ENCODE measurements at regions of chr10 and their contacts with region 1.

Region 1: GRCh38 chr10:88932539-88933256 is 19.9 kb downstream of the ACTA2 start:
- DNase-seq: no peak
- ATAC-seq: peak; percentile 80
- H3K4me3 ChIP-seq: no peak overlapping the region
- H3K27ac ChIP-seq: peak overlapping the region; percentile 56; the same call in 1 of the 2 replicates
- H3K4me1 ChIP-seq: peaks cover 21% of the 10 kb centered on the region
- H3K27me3 ChIP-seq: no peaks in the 10 kb centered on the region
- CTCF ChIP-seq: peak; percentile 85 to 98 (median 95); a peak in 5 of 6 replicates
- EP300 ChIP-seq: no peak
- POLR2A ChIP-seq: no peak
- RAD21 ChIP-seq: peak; percentile 81

Region 2: DNA sequence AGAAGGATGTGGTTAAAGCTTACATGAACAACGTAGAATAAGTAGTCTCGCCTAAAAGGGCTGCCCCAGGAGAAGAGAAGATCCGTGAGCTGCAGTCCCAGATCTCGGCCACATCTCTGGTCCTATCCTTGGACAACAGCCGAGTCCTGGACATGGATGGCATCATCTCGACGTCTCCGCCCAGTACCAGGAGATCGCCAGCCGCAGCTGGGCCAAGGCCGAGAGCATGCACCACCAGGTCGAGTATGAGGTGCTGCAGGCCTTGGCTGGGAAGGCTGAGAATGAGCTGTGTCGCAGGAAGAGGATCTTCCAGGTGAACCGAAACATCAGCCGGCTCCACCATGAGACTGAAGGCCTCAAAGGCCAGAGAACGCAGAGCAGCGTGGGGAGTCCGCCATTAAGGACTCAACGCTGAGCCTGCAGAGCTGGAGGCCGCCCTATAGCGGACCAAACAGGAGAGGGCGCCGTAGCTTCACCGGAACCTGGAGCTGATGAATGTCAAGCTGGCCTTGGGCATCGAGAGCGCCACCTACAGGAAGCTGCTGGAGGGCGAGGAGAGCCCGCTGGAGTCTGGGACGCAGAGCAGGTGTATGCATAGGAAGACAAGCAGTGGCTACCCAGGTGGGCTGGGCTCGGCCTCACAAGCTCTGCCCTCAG is 204.5 kb before region 1 on chr10:
- CTCF ChIA-PET with region 1: interaction called, 17 read pairs
- POLR2A ChIA-PET with region 1: no interaction called
- RAD21 ChIA-PET with region 1: interaction called, 23 read pairs
- SMC1A ChIA-PET with region 1: interaction called, 11 read pairs
- in situ Hi-C with region 1: no loop called
- intact Hi-C with region 1: no loop called
- DNase-seq: no peak
- ATAC-seq: peak; percentile 53
- H3K4me3 ChIP-seq: no peak overlapping the region
- H3K27ac ChIP-seq: no peak overlapping the region
- H3K4me1 ChIP-seq: peaks cover 3% of the 10 kb centered on the region
- H3K27me3 ChIP-seq: no peaks in the 10 kb centered on the region
- CTCF ChIP-seq: peak; percentile 39 to 65 (median 51); a peak in 5 of 6 replicates
- EP300 ChIP-seq: no peak
- POLR2A ChIP-seq: no peak
- RAD21 ChIP-seq: peak; percentile 79

Region 3: DNA sequence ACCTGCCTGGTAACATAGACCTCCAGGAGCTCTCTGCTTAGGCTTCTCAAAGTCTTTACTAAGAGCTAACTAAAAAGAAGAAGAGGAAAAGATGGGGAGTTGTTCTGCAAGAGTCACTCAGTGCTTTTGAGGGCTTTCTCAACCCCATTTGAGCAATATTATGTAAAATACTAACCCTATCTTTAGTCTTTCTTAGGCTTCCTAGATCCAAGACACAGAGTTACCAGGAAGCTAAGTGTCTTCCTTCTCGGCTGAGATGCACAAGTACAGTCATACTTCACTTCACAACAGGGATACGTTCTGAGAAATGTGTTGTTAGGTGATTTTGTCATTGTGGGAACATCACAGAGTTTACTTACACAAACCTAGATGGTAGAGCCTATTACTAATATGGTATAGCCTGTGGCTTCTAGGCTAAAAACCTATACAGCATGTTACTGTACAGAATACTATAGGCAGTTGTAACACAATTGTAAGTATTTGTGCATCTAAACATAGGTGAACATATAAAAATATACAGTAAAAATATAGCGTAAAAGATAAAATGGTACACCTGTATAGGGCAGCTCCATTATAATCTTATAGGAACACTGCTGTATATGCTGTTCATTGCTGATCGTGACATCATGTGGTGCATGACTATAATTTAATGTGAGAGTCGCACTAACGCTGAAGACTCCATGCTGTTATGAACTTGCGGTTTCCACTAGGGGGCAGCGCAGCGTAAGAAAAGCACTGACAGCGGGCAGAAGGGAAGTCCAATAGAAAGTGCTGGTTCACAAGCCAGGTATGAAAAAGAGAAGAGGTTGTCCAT is 97.4 kb before region 1 on chr10:
- CTCF ChIA-PET with region 1: interaction called, 895 read pairs
- POLR2A ChIA-PET with region 1: interaction called, 64 read pairs
- RAD21 ChIA-PET with region 1: interaction called, 390 read pairs
- SMC1A ChIA-PET with region 1: interaction called, 575 read pairs
- in situ Hi-C with region 1: loop called (anchors 5 kb)
- intact Hi-C with region 1: loop called (anchors 1 kb)
- DNase-seq: peak; percentile 59
- ATAC-seq: peak; percentile 96
- H3K4me3 ChIP-seq: no peak overlapping the region
- H3K27ac ChIP-seq: no peak overlapping the region
- H3K4me1 ChIP-seq: peaks cover 11% of the 10 kb centered on the region
- H3K27me3 ChIP-seq: no peaks in the 10 kb centered on the region
- CTCF ChIP-seq: peak; percentile 78 to 97 (median 91)
- EP300 ChIP-seq: no peak
- POLR2A ChIP-seq: no peak
- RAD21 ChIP-seq: peak; percentile 99

Region 4: GRCh38 chr10:88886557-88886956 is 46.1 kb before region 1 on chr10:
- CTCF ChIA-PET with region 1: interaction called, 64 read pairs
- POLR2A ChIA-PET with region 1: interaction called, 7 read pairs
- RAD21 ChIA-PET with region 1: interaction called, 54 read pairs
- SMC1A ChIA-PET with region 1: interaction called, 110 read pairs
- in situ Hi-C with region 1: no loop called
- intact Hi-C with region 1: loop called (anchors 2 kb)
- DNase-seq: no peak
- ATAC-seq: peak; percentile 76
- H3K4me3 ChIP-seq: peak overlapping the region; percentile 55
- H3K27ac ChIP-seq: peak overlapping the region; percentile 61
- H3K4me1 ChIP-seq: peaks cover 46% of the 10 kb centered on the region
- H3K27me3 ChIP-seq: no peaks in the 10 kb centered on the region
- CTCF ChIP-seq: no peak
- EP300 ChIP-seq: no peak
- POLR2A ChIP-seq: 0 out of 2 replicates have a peak, but pooled peaks have one; percentile 26
- RAD21 ChIP-seq: no peak

Region 5: DNA sequence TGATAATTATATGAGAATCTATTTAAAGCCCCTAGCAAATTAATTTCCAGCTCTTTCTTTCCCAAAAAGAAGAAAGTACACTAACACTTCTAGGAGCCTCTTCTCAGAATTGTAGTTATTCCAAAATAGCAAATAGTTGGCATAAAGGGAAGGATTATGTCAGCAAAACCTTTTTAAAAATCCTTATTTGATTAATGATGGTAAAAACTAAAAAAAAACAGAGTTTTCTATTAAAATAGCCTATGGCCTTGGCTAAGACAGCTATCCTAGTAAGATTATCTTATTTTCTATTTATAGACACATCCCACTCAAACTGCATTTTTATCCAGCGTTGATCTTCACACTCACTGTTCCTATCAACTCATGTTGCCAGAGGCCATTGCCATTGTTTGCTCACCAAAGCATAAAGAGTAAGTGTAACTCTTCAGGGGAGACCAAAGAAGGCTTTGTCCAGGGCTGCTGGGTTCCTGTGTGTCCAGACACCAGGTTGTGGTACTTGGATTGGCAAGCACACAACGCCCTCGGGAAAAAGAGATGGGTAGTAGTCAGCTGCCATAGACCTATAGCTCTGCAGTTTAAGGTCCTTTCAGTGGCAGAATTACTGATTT is 11.6 kb before region 1 on chr10:
- CTCF ChIA-PET with region 1: interaction called, 29 read pairs
- POLR2A ChIA-PET with region 1: interaction called, 4 read pairs
- RAD21 ChIA-PET with region 1: interaction called, 4 read pairs
- SMC1A ChIA-PET with region 1: interaction called, 42 read pairs
- in situ Hi-C with region 1: no loop called
- intact Hi-C with region 1: no loop called
- DNase-seq: no peak
- ATAC-seq: no peak
- H3K4me3 ChIP-seq: no peak overlapping the region
- H3K27ac ChIP-seq: no peak overlapping the region
- H3K4me1 ChIP-seq: no peaks in the 10 kb centered on the region
- H3K27me3 ChIP-seq: no peaks in the 10 kb centered on the region
- CTCF ChIP-seq: no peak
- EP300 ChIP-seq: no peak
- POLR2A ChIP-seq: no peak
- RAD21 ChIP-seq: no peak

Region 6: GRCh38 chr10:88996927-88997326 is 64.2 kb after region 1 on chr10:
- CTCF ChIA-PET with region 1: interaction called, 250 read pairs
- POLR2A ChIA-PET with region 1: interaction called, 4 read pairs
- RAD21 ChIA-PET with region 1: interaction called, 23 read pairs
- SMC1A ChIA-PET with region 1: interaction called, 114 read pairs
- in situ Hi-C with region 1: no loop called
- intact Hi-C with region 1: no loop called
- DNase-seq: peak; percentile 47
- ATAC-seq: peak; percentile 54
- H3K4me3 ChIP-seq: peak overlapping the region; percentile 37; the same call in 1 of the 2 replicates
- H3K27ac ChIP-seq: peak overlapping the region; percentile 3
- H3K4me1 ChIP-seq: peaks cover 34% of the 10 kb centered on the region
- H3K27me3 ChIP-seq: no peaks in the 10 kb centered on the region
- CTCF ChIP-seq: no peak
- EP300 ChIP-seq: no peak
- POLR2A ChIP-seq: no peak
- RAD21 ChIP-seq: no peak

Region 7: DNA sequence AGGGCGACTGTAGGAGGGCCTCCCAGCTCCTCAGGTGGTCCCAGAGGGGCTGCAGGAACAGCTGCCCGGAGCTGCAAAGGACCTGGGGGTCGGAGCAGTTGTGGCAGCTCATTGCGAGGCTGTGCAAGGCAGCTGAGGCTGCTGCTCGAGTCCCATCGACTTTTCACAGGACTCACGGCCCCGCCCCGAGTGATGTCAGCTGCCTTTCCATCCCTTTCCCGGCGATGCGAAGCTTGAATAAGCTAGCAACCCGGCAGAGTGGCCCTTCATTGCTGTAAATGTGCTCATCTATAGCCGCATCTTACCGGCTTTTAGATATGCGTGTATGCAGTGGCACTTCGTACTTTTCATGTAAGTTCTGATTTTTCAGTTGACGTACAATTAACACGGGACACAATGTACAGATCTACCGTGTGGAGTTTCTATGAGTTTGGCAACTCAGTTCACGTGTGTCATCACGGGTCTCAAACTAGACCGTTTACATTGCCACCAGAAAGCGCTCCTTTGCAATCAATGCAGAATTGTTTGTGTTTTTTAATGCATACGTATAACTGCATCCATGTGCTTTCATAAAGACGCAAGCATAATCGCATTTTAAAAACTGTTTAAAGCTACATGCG is 274.6 kb after region 1 on chr10 and contains the start of gene CH25H:
- CTCF ChIA-PET with region 1: interaction called, 45 read pairs
- POLR2A ChIA-PET with region 1: no interaction called
- RAD21 ChIA-PET with region 1: interaction called, 11 read pairs
- SMC1A ChIA-PET with region 1: interaction called, 9 read pairs
- in situ Hi-C with region 1: loop called (anchors 5 kb)
- intact Hi-C with region 1: no loop called
- DNase-seq: no peak
- ATAC-seq: peak; percentile 59
- H3K4me3 ChIP-seq: peak within 1 kb of the TSS; percentile 66
- H3K27ac ChIP-seq: no peak within 1 kb of the TSS
- H3K4me1 ChIP-seq: peaks cover 24% of the 10 kb centered on the region
- H3K27me3 ChIP-seq: peaks cover 6 to 22% of the 10 kb centered on the region in 2 experiments
- CTCF ChIP-seq: no peak
- EP300 ChIP-seq: no peak
- POLR2A ChIP-seq: no peak
- RAD21 ChIP-seq: no peak
- polyA plus RNA-seq, gene CH25H: not detected